ENCODE measurements at regions of chr1 and their contacts with region 1.

Region 1: DNA sequence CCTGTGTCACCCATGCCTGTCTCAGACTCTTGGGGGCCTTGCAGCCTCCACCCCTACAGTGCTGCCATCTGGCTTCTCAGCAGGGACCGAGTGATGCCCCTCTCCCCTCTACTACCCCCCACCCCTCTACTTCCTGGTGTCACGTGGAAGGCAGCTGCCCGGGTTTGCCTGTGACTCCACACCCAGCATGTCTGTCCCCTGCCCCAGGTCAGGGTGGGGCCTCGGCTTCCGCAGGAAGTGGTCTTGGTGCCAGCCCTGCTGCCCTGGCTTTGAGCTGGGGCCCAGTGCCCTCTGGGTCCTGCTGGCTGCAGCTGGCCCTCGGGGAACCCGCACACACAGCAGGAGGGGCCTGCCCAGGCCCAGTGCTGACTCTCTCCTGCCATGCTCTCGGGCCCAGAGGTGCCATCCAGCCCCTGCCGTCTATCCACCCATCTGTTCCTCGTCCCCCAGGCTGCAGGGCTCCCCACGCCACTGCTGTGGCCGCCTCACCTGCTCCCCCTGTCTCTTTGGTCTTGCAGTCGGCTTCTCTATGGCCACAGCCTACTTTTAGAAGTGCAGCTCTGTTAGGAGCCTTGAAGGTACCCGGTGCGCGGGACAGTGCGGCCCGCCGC is 24.0 kb downstream of the PLCH2 start:
- DNase-seq: no peak
- ATAC-seq: no peak
- H3K4me3 ChIP-seq: no peak overlapping the region
- H3K27ac ChIP-seq: no peak overlapping the region
- H3K4me1 ChIP-seq: peaks cover 0 to 13% (median 7%) of the 10 kb centered on the region in 9 donors
- H3K27me3 ChIP-seq: peaks cover 3 to 69% (median 60%) of the 10 kb centered on the region in 7 donors
- CTCF ChIP-seq: no peak

Region 2: GRCh38 chr1:1583347-1584010 is 916.6 kb before region 1 on chr1:
- intact Hi-C with region 1: no loop called
- DNase-seq: no peak
- ATAC-seq: peak in 1 of 8 donors; percentile 14
- H3K4me3 ChIP-seq: no peak overlapping the region
- H3K27ac ChIP-seq: no peak overlapping the region
- H3K4me1 ChIP-seq: no peaks in the 10 kb centered on the region
- H3K27me3 ChIP-seq: peaks cover 0 to 51% (median 23%) of the 10 kb centered on the region in 7 donors
- CTCF ChIP-seq: no peak

Region 3: DNA sequence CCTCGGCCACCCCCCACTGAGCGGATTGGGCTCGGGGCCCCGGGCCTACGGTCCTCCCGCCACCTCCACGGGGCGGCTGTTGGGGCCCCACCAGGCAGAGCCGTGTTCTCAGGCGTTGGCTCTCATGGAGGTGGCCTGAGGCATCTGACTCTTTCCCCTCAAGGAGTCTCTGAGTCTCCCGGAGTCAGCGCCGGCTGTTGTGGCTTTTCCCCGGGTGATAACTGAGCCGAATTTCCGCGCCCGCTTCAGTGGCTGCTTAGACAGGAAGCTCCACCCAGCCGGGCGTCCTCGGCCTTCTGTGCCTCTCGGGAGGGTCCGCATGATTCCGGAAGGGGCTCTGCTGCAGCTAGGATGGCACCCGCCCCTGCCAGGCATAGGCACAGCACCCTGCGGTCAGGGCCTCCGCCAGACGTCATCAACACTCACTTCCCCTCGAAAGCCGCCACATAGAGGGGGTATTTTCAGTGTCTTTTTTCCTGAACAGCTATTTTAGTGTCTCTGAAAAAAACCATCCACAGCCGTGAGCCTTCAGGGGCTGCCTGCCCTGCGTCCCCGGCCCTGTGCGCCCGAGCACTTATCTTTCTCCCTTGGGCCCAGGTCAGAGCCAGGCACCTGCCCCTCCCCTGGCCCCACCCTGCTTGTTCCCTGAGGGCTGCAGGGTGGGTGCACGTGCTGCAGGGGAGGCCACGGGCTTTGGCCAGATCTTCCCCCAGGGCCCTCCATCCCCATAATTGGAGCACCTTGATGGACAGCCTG is 199.1 kb before region 1 on chr1:
- intact Hi-C with region 1: no loop called
- DNase-seq: peak; percentile 84 to 85
- ATAC-seq: peak; percentile 46 to 76 (median 63)
- H3K4me3 ChIP-seq: peak overlapping the region in 9 of 10 donors; percentile 3 to 49 (median 42)
- H3K27ac ChIP-seq: peak overlapping the region; percentile 28 to 97 (median 88)
- H3K4me1 ChIP-seq: peaks cover 24 to 85% (median 58%) of the 10 kb centered on the region in 9 donors
- H3K27me3 ChIP-seq: no peaks in the 10 kb centered on the region
- CTCF ChIP-seq: no peak

Region 4: DNA sequence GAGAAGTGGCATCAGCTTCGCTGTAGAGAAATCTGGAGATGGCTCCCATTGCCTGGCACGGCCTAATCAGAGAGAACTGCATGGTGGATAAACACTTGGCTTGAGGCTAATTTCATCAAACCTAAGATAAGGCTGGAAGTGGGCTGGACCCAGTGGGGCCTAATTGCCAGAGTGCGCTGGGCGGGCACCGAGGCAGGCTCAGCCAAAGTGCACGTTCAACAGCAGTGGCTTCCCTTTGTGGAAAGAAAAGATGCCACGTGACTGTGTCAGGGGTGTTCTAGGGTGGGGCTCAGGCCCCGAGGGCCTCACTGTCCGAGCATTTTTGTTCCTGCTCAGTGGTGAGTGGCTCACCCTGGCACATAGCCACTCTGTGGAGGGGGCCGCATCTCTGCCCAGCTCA is 18.2 kb before region 1 on chr1:
- intact Hi-C with region 1: loop called in 1 of 10 experiments (anchors 1 kb)
- DNase-seq: no peak
- ATAC-seq: no peak
- H3K4me3 ChIP-seq: no peak overlapping the region
- H3K27ac ChIP-seq: no peak overlapping the region
- H3K4me1 ChIP-seq: no peaks in the 10 kb centered on the region
- H3K27me3 ChIP-seq: peaks cover 0 to 11% (median 0%) of the 10 kb centered on the region in 7 donors
- CTCF ChIP-seq: no peak

Measured in heart right ventricle (tissue), 16 donors.